ENCODE measurements at regions of chr16 and their contacts with region 1.

Region 1: GRCh38 chr16:30407102-30407803 is at the start of gene ZNF771:
- DNase-seq: peak; percentile 96
- ATAC-seq: peak; percentile 84
- H3K4me3 Mint-ChIP-seq: peak within 1 kb of the TSS; percentile 90
- H3K27ac Mint-ChIP-seq: peak within 1 kb of the TSS; percentile 93
- H3K4me1 Mint-ChIP-seq: peaks cover 20% of the 10 kb centered on the region
- H3K27me3 Mint-ChIP-seq: peaks cover 21% of the 10 kb centered on the region
- CTCF ChIP-seq: no peak
- total RNA-seq, gene ZNF771: 10.0 to 12.5 TPM (median 11.3 TPM) in 3 replicates

Region 2: DNA sequence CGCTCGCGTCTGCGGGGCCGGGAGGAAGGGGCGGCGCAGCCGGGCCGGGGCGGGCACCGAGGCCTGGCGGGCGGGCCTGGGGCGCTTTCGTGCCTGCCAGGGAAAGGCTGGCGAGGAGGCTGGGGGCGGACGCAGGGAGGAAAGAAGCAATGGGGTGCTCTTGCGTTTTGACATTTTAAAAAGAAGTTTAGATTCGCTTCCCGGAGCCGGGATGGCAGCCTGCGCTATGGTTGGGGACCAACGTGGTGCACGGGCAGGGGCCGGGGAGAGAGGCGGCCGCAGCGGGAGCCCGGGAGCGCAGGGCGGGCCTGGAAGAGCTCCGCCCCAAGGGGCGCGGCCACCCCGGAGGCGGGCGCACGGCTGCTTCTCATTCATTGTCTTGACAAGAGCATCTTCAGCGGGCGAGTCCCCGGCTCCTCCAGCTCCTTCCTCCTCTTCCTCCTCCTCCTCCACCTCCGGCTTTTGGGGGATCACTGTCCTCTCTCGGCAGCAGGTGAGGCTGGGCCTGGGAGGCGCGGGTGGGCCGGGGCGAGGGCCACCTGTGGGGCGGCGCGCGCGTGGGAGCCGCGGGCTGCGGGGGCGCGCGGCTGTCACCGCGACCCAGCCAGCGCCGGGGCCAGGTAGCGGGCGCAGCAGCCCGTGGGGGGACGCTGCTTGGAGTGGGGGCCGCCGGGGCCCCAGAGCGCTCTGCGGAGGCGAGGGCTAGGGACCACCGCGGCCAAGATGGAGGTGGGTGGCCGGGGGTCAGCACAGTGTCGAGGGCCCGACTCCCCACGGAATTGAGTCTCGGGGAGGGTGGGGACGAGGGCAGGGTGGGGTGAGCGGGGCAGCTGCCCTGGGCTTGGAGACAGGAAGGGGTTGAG is 223.8 kb before region 1 on chr16 and contains the start of gene CORO1A:
- CTCF ChIA-PET with region 1: interaction called, 17 read pairs
- POLR2A ChIA-PET with region 1: no interaction called
- DNase-seq: peak; percentile 86
- ATAC-seq: peak; percentile 78
- H3K4me3 Mint-ChIP-seq: peak within 1 kb of the TSS; percentile 74
- H3K27ac Mint-ChIP-seq: no peak within 1 kb of the TSS
- H3K4me1 Mint-ChIP-seq: peaks cover 7% of the 10 kb centered on the region
- H3K27me3 Mint-ChIP-seq: peaks cover 51% of the 10 kb centered on the region
- CTCF ChIP-seq: no peak
- total RNA-seq, gene CORO1A: 6.2 to 10.0 TPM (median 6.5 TPM) in 3 replicates

Region 3: DNA sequence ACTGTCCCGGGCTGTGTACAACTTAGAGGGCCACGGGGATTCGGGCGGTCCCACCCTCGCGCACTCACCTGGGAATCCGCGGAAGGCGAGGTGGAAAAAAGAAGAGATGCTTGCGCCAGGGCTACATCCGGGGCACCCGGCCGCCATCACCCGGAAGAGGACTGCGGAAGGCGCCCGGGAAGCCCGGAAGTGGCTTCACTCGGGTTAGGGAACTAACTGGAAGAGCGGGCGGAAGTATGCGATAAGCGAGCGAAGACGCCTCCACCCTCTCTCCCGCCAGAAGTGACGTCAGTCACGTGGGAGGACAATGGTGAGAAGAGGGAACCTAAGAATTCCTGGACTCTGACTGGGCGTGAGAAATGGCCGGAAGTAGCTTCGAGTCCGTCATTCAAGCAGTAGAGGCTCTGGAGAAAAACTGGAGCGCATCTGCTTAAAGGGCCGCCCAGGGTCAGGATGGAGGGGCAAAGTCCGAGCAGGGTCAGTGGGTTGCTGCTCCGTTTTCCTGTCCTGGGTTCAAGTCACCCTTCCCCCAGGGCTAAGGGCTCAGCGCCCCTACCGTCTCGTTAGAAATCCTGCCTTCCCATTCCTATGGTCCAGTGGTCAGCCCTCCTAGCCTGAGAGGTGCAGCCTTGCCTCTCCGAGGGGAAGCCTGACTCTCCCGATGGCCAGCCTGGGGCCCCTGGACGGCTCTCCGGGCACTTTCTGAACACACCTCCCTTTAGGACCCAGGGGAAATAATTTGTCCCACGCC is 51.9 kb before region 1 on chr16 and contains the start of gene CD2BP2:
- CTCF ChIA-PET with region 1: interaction called, 12 read pairs
- POLR2A ChIA-PET with region 1: no interaction called
- DNase-seq: peak; percentile 94
- ATAC-seq: peak; percentile 84
- H3K4me3 Mint-ChIP-seq: peak within 1 kb of the TSS; percentile 93
- H3K27ac Mint-ChIP-seq: peak within 1 kb of the TSS; percentile 98
- H3K4me1 Mint-ChIP-seq: peaks cover 26% of the 10 kb centered on the region
- H3K27me3 Mint-ChIP-seq: no peaks in the 10 kb centered on the region; the same call in 1 of the 2 replicates
- CTCF ChIP-seq: no peak
- total RNA-seq, gene CD2BP2: 51.0 to 56.6 TPM (median 51.1 TPM) in 3 replicates

Region 4: DNA sequence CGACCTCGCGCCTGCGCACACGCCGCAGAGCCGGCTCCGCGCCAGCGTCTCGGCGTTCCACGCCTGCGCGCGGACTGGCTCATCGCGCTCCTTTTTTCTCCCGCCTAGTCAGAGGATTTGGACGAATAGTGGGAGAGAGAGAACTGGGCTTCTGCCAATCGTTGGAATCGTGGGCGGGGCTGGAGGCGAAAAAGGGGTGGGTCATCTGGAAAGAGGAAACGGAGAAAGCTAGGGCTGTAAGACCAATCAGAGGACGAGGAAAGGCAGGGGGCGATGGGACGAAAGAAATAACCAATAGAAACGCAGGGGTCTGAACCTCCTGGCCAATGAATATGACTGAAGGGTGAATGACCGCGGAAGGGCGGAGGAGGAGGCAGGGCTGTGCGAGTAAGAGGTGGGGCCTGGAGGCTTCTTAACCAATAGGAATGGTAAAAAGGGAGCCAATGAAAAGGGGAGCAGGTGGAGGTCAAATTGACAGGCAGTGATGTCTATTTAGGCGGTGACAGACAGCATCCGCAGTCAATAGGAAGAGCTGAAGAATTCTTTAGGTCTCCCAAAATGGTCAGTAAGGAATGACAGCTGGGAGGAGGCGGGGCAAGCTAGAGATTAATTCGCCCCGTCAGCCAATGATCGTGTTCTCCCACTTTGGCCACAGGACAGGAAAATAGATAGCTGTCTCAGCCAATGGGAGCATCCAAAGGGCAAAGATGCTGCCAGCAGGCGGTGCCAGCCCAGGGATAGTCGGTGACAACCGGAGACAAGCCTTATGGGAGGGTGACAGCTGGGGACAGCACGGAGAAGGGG is 36.6 kb before region 1 on chr16 and contains the start of gene TBC1D10B:
- CTCF ChIA-PET with region 1: interaction called, 47 read pairs
- POLR2A ChIA-PET with region 1: interaction called, 3 read pairs
- DNase-seq: peak; percentile 99
- ATAC-seq: peak; percentile 91
- H3K4me3 Mint-ChIP-seq: peak within 1 kb of the TSS; percentile 80
- H3K27ac Mint-ChIP-seq: peak within 1 kb of the TSS; percentile 57
- H3K4me1 Mint-ChIP-seq: peaks cover 37% of the 10 kb centered on the region
- H3K27me3 Mint-ChIP-seq: no peaks in the 10 kb centered on the region; the same call in 1 of the 2 replicates
- CTCF ChIP-seq: no peak
- total RNA-seq, gene TBC1D10B: 33.4 to 40.5 TPM (median 34.6 TPM) in 3 replicates

Region 5: DNA sequence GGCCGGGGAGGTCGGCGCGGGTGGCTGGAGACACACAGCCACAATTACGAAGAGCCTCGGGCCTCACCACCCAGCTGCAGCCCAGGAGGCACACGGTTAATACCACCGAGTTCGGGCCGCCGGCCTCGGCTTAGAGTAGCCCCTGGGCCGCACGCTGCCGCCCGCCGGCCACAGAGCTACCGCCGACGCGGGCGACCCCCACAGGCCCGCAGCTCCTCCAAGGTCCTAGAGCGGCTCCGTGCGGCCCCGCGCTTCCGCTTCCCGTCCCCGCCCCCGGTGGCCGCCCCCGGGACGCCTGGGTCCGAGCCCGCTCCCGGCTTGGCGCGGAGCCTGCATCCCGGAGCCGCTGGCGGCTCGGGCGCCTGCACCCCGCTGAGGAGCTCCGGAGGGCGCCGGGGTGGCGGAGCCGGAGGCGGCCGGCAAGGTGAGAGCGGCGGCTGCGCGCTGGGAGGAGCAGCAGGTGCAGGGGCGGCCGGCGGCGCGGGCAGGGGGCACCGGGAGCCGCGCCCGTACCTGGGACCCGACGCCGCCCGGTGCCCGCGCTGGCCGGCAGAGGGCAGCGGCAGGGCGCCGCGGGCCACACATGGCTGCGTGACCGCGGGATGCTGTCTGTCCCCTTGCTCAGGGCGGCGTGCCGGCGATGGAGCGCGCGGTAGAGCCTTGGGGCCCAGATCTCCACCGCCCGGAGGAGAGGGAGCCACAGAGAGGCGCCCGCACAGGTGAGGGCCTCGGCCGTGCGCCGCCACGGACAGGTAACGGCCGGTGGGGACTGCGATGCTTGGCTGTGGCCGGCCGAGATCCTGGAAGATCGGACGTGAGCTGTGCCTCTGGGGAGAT is 11.9 kb before region 1 on chr16 and contains the start of gene ZNF48:
- CTCF ChIA-PET with region 1: interaction called, 97 read pairs
- POLR2A ChIA-PET with region 1: interaction called, 26 read pairs
- DNase-seq: peak; percentile 85
- ATAC-seq: peak; percentile 81
- H3K4me3 Mint-ChIP-seq: peak within 1 kb of the TSS; percentile 97
- H3K27ac Mint-ChIP-seq: peak within 1 kb of the TSS; percentile 98
- H3K4me1 Mint-ChIP-seq: peaks cover 36% of the 10 kb centered on the region
- H3K27me3 Mint-ChIP-seq: peaks cover 4% of the 10 kb centered on the region; the same call in 1 of the 2 replicates
- CTCF ChIP-seq: no peak
- total RNA-seq, gene ZNF48: 31.3 to 39.3 TPM (median 32.1 TPM) in 3 replicates

Region 6: DNA sequence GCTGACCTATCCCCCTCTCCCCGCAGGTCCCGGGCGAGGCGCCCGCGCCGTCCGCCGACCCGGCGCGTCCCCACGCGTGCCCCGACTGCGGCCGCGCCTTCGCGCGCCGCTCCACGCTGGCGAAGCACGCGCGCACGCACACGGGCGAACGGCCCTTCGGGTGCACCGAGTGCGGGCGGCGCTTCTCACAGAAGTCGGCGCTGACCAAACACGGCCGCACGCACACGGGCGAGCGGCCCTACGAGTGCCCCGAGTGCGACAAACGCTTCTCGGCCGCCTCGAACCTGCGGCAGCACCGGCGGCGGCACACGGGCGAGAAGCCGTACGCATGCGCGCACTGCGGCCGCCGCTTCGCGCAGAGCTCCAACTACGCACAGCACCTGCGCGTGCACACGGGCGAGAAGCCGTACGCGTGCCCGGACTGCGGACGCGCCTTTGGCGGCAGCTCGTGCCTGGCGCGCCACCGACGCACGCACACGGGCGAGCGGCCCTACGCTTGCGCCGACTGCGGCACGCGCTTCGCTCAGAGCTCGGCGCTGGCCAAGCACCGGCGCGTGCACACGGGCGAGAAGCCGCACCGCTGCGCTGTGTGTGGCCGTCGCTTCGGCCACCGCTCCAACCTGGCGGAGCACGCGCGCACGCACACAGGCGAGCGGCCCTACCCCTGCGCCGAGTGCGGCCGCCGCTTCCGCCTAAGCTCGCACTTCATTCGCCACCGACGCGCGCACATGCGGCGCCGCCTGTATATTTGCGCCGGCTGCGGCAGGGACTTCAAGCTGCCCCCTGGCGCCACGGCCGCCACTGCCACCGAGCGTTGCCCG is 10.5 kb after region 1 on chr16:
- CTCF ChIA-PET with region 1: interaction called, 59 read pairs
- POLR2A ChIA-PET with region 1: interaction called, 12 read pairs
- DNase-seq: peak; percentile 88
- ATAC-seq: peak; percentile 88
- H3K4me3 Mint-ChIP-seq: peak overlapping the region; percentile 54
- H3K27ac Mint-ChIP-seq: no peak overlapping the region
- H3K4me1 Mint-ChIP-seq: peaks cover 9% of the 10 kb centered on the region
- H3K27me3 Mint-ChIP-seq: no peaks in the 10 kb centered on the region
- CTCF ChIP-seq: no peak

Region 7: DNA sequence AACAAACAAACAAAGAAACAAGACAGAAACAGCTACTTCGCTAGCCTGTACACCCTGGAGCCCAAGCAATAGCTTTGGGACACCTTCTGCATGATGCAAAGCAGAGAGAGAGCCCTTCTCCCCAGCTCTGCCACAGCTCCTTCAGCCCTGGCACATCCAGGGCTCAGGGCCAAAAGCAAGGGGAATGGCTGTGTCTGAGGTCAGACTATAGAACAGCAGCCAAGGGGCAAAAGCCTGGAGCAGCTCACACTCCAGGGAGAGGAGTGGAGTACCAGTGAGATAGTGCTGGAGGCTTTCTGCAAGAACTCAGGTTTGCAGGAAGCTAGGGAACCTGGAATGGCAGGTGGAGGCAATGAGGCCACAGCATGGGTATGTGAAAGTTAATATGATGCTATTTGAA is 50.0 kb after region 1 on chr16:
- CTCF ChIA-PET with region 1: no interaction called
- POLR2A ChIA-PET with region 1: no interaction called
- DNase-seq: no peak
- ATAC-seq: no peak
- H3K4me3 Mint-ChIP-seq: no peak overlapping the region
- H3K27ac Mint-ChIP-seq: no peak overlapping the region
- H3K4me1 Mint-ChIP-seq: no peaks in the 10 kb centered on the region; the same call in 1 of the 2 replicates
- H3K27me3 Mint-ChIP-seq: no peaks in the 10 kb centered on the region; the same call in 1 of the 2 replicates
- CTCF ChIP-seq: no peak

Region 8: GRCh38 chr16:30473231-30474073 is 66.2 kb after region 1 on chr16:
- CTCF ChIA-PET with region 1: no interaction called
- POLR2A ChIA-PET with region 1: no interaction called
- DNase-seq: no peak
- ATAC-seq: no peak
- H3K4me3 Mint-ChIP-seq: no peak overlapping the region
- H3K27ac Mint-ChIP-seq: no peak overlapping the region
- H3K4me1 Mint-ChIP-seq: no peaks in the 10 kb centered on the region
- H3K27me3 Mint-ChIP-seq: peaks cover 15% of the 10 kb centered on the region
- CTCF ChIP-seq: no peak

Region 9: DNA sequence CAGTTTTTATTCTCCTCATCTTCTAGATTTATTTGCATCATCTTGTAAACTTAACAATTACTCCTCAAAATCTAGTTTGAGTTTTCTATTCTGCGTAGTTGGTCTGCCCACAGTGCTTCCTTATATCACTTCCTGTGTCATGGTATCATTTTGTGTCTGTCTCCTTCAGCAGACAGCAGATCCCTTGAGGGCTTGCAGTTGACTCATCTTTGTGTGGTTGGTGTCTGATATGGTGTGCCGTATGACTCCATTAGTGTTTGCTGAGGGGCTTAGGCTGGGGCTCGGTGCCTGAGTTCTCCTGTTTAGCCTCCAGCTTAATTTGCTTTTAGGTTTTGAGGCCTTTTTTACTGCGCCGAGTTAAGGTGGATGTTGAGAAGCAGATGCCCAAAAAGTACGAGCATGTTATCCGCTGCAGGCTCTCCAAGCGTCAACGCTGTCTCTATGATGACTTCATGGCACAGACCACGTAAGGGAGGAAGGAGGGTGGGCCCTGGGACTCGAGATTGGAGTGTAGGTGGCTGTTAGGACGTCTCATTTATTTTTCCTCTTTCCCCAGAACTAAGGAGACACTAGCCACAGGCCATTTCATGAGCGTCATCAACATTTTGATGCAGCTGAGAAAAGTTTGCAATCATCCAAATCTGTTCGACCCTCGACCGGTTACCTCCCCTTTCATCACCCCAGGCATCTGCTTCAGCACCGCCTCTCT is 308.6 kb after region 1 on chr16:
- CTCF ChIA-PET with region 1: no interaction called
- POLR2A ChIA-PET with region 1: no interaction called
- DNase-seq: no peak
- ATAC-seq: no peak
- H3K4me3 Mint-ChIP-seq: no peak overlapping the region
- H3K27ac Mint-ChIP-seq: no peak overlapping the region
- H3K4me1 Mint-ChIP-seq: no peaks in the 10 kb centered on the region
- H3K27me3 Mint-ChIP-seq: no peaks in the 10 kb centered on the region
- CTCF ChIP-seq: no peak